IMR-90 (cell line): ENCODE measurements at regions of chr2 and their contacts with region 1.

Region 1: GRCh38 chr2:145186303-145186702 is 666.4 kb upstream of the ZEB2 start:
- DNase-seq: peak; percentile 23
- ATAC-seq: no peak
- H3K4me3 ChIP-seq: no peak overlapping the region
- H3K27ac ChIP-seq: no peak overlapping the region
- H3K4me1 ChIP-seq: peaks cover 1% of the 10 kb centered on the region; the same call in 1 of the 2 replicates
- H3K27me3 ChIP-seq: no peaks in the 10 kb centered on the region
- CTCF ChIP-seq: no peak
- POLR2A ChIP-seq: no peak
- RAD21 ChIP-seq: no peak

Region 2: DNA sequence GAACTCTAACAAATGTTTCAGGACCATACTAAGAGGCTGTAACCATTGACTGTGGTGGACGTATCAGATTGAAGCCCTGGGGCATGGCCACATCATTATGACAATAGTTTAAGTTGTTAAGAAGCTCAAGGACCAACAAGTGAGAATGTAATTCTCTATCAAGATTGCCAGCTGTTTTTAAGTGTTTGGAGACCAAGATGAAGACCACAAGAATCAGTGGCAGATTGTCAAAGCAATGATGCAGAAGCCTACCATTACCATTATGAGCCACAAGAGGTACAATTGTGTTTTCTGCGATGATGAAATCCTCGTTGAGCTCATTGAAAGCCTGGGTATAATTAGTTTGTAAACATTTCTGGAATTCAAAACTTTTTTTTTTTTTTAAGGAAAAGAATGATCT is 405.3 kb before region 1 on chr2:
- CTCF ChIA-PET with region 1: no interaction called
- POLR2A ChIA-PET with region 1: no interaction called
- dilution Hi-C with region 1: no loop called
- in situ Hi-C with region 1: no loop called
- intact Hi-C with region 1: no loop called
- DNase-seq: no peak
- ATAC-seq: no peak
- H3K4me3 ChIP-seq: no peak overlapping the region
- H3K27ac ChIP-seq: no peak overlapping the region
- H3K4me1 ChIP-seq: no peaks in the 10 kb centered on the region
- H3K27me3 ChIP-seq: no peaks in the 10 kb centered on the region
- CTCF ChIP-seq: no peak
- POLR2A ChIP-seq: no peak
- RAD21 ChIP-seq: no peak

Region 3: GRCh38 chr2:145551686-145552085 is 365.4 kb after region 1 on chr2:
- CTCF ChIA-PET with region 1: no interaction called
- POLR2A ChIA-PET with region 1: no interaction called
- dilution Hi-C with region 1: no loop called
- in situ Hi-C with region 1: no loop called
- intact Hi-C with region 1: no loop called
- DNase-seq: no peak
- ATAC-seq: no peak
- H3K4me3 ChIP-seq: no peak overlapping the region
- H3K27ac ChIP-seq: no peak overlapping the region
- H3K4me1 ChIP-seq: no peaks in the 10 kb centered on the region
- H3K27me3 ChIP-seq: no peaks in the 10 kb centered on the region
- CTCF ChIP-seq: no peak
- POLR2A ChIP-seq: no peak
- RAD21 ChIP-seq: no peak

Region 4: DNA sequence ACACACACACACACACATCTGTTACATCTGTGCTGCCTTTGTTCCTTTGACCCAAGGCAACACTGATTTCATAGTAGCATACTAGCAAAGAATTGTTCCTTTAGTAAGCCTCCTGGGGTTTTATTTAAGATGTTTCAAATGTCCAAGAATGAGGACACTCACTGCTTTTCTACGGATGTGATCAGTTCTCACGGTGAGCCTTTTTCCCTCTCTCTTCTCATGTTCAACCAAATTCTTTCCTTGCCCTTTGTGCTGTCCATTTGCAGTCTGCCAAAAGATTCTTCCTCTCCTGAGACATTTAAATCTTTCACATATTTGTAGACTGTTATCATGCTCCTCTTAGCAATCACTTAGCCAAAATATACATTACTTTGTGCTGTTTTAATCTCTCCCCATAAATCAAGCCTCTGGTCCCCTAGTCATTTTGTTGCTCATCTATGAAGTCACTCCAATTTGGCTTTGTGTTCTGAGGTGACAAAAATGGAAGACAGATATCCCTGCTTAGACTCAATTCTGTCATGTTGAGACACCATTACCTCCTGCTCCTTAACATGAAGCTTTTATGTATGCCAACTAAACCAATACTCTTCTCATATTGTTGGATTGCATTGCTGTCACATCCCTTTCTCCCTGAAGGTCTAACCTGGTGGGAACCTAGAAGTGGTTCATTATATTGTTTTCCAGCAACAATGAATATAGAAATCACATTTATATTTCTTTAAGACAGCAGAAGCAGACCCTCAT is 1053.3 kb after region 1 on chr2:
- CTCF ChIA-PET with region 1: no interaction called
- POLR2A ChIA-PET with region 1: no interaction called
- dilution Hi-C with region 1: no loop called
- in situ Hi-C with region 1: no loop called
- intact Hi-C with region 1: loop called (anchors 10 kb)
- DNase-seq: peak; percentile 93
- ATAC-seq: peak; percentile 92
- H3K4me3 ChIP-seq: no peak overlapping the region
- H3K27ac ChIP-seq: peak overlapping the region; percentile 69
- H3K4me1 ChIP-seq: peaks cover 8% of the 10 kb centered on the region
- H3K27me3 ChIP-seq: no peaks in the 10 kb centered on the region
- CTCF ChIP-seq: no peak
- POLR2A ChIP-seq: no peak
- RAD21 ChIP-seq: no peak